Posterior cingulate gyrus (tissue), 11 donors: ENCODE measurements at regions of chr14 and their contacts with region 1.

Region 1: GRCh38 chr14:53295985-53296582 is 143.0 kb upstream of the DDHD1 start:
- DNase-seq: peak in 1 of 10 donors; percentile 20

Region 2: DNA sequence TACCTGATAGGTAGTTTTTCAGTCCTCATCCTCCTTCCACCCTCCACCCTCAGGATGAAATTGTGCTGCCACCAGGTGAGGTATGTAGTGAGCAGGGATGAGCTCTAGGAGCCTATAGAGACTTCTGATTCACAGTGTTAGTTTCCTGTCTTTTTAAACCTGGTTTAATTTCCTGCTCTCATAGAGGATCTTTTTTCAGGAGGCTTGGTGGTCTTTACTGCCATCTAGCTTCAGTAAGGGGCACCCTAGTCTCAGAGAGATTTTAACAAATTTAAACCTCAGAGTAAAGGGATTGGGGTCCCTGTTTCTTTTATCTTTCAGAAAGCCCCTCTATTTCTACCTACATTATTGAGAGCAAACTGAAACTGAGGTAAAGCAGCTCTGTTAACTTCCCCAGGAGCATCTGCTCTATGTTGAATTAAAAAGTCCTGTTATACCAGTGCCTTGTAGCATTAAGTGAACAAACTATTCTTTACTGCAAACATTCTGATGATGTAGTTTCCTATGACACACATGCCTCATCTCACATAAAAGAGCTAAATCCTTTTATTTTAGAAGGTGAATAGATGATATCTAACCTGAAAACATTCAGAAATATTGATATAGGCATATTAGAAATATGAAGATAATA is 29.2 kb after region 1 on chr14:
- intact Hi-C with region 1: loop called (anchors 1 kb)
- DNase-seq: no peak

Region 3: DNA sequence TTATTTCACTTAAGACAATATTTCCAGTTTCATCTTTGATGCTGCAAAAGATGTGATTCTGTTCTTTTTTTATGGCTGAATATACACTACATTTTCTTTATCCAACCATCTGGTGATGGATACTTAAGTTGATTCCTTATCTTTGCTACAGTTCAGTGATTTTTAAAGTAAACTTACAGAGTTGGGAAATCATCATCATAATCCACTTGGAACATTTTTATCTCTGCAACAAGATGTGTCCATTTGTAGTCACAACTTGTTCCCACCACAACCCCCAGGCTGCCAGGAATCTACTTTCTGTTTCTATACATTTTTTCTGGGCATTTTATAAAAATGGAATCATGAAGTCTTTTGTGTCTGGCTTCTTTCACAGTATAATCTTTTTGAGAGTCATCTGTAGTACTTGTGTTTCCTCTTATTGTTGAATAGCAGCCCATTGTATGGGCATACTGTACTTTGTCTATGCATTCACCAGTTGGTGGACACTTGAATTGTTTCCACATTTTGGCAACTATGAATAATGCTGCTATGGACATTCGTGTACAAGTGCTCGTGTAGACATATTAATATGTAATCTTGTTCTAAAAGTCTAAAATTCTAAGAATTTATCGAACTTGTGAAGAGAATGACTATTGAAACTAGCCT is 69.5 kb after region 1 on chr14:
- intact Hi-C with region 1: no loop called
- DNase-seq: peak in 1 of 10 donors; percentile 18

Region 4: DNA sequence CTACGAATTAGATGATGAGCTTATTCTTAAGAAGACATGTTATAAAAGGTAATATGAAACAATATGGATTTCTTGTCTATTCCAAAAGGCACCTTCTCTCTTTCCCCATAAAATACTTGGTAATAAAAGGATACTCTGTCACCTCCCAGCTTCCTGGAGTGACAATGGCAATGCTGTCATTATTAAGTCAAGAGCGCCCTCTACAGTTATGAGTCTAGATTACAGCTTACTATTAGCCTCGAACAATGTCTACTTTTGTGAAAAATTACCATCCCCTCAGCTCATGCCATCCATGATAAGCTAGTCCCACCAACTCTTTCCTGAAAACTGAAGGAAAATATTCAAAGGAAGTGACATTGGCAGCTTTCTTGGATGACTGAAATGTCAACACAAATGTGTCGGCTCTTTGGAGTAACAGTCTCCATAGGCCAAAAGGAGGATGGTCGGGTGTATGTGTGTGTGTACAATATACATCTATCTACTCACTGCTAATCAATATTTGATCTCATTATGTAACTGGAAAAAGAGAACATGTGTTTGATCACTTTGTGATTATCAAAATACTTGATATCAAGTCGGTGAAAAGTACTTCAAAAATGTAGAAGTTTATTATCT is 1052.0 kb after region 1 on chr14:
- intact Hi-C with region 1: loop called (anchors 5 kb)
- DNase-seq: no peak